CD8-positive, alpha-beta T cell (primary cell): ENCODE measurements at regions of chr15 and their contacts with region 1.

Region 1: GRCh38 chr15:38164061-38164460 is 88.6 kb upstream of the SPRED1 start:
- DNase-seq: no peak
- ATAC-seq: no peak
- H3K4me3 ChIP-seq: no peak overlapping the region
- H3K4me3 Mint-ChIP-seq: no peak overlapping the region
- H3K27ac ChIP-seq: no peak overlapping the region
- H3K27ac Mint-ChIP-seq: no peak overlapping the region
- H3K4me1 ChIP-seq: no peaks in the 10 kb centered on the region
- H3K4me1 Mint-ChIP-seq: no peaks in the 10 kb centered on the region
- H3K27me3 ChIP-seq: no peaks in the 10 kb centered on the region
- H3K27me3 Mint-ChIP-seq: peaks cover 14% of the 10 kb centered on the region
- CTCF ChIP-seq: no peak

Region 2: GRCh38 chr15:38176155-38176554 is 12.1 kb after region 1 on chr15:
- CTCF ChIA-PET with region 1: no interaction called
- POLR2A ChIA-PET with region 1: no interaction called
- intact Hi-C with region 1: loop called in 1 of 2 experiments (anchors 2 kb)
- DNase-seq: no peak
- ATAC-seq: no peak
- H3K4me3 ChIP-seq: no peak overlapping the region
- H3K4me3 Mint-ChIP-seq: no peak overlapping the region
- H3K27ac ChIP-seq: no peak overlapping the region
- H3K27ac Mint-ChIP-seq: no peak overlapping the region
- H3K4me1 ChIP-seq: no peaks in the 10 kb centered on the region
- H3K4me1 Mint-ChIP-seq: no peaks in the 10 kb centered on the region
- H3K27me3 ChIP-seq: peaks cover 0 to 4% of the 10 kb centered on the region in 2 experiments
- H3K27me3 Mint-ChIP-seq: peaks cover 31% of the 10 kb centered on the region
- CTCF ChIP-seq: no peak